Activated T-helper 2 cell treated with anti-CD3 and anti-CD28 coated beads, Interferon-gamma antibody, Interleukin-2, Interleukin-4, amounts not matched to agents 10 μg/mL and 5 μg/mL and 100 μg/mL, durations not matched to agents 14 hours and 24 hours and 36 hours (primary cell): ENCODE measurements at regions of chr7 and their contacts with region 1.

Region 1: GRCh38 chr7:43582503-43583423 is at the start of gene STK17A:
- DNase-seq: peak; percentile 94
- H3K4me3 Mint-ChIP-seq: peak within 1 kb of the TSS; percentile 91
- H3K27ac Mint-ChIP-seq: peak within 1 kb of the TSS; percentile 91
- H3K4me1 Mint-ChIP-seq: peaks cover 34% of the 10 kb centered on the region
- H3K27me3 Mint-ChIP-seq: peaks cover 19% of the 10 kb centered on the region
- total RNA-seq, gene STK17A: 20.4 and 21.7 TPM in 2 replicates

Region 2: GRCh38 chr7:43612599-43613589 is 30.1 kb after region 1 on chr7:
- intact Hi-C with region 1: loop called (anchors 1 kb)
- DNase-seq: no peak
- H3K4me3 Mint-ChIP-seq: peak overlapping the region; percentile 1
- H3K27ac Mint-ChIP-seq: peak overlapping the region; percentile 70
- H3K4me1 Mint-ChIP-seq: peaks cover 31% of the 10 kb centered on the region
- H3K27me3 Mint-ChIP-seq: no peaks in the 10 kb centered on the region

Region 3: DNA sequence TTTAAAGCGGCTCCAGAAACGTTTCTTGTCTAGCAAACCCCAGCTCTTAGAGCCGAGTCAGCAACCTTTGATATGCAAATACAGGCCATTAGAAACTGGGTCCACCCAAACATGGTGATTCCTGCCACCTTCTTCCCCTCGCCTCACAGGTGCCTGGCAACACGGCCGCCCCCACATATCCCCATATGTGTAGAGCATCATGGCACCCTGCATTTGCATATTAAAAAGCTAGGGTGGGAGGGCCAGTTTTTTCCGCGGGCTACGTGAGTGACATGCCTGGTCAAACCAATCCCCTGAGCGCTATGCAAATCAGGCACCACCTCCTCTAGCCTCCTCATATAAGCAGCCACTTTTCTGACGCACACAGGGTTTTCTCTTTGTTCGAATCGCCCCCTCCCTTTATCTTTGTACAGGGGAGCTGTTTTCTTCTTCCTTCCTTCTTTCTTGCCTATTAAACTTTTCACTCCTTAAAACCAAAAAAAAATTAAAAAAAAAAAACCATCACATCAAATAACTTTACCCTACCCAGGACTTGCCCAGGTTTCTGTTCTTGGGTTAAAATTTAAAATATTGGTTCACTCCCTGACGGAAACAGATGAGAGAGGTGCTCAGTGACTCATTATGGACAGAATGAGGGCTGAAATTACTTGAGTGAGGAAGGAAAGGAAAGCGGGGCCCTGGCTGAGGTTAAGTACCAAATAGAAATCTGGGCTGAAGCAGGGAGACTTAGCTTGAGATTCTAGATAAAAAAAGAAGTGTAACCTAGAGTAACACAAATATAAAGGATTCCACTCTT is 86.7 kb after region 1 on chr7:
- intact Hi-C with region 1: loop called (anchors 1 kb)
- DNase-seq: peak; percentile 26
- H3K4me3 Mint-ChIP-seq: peak overlapping the region; percentile 73
- H3K27ac Mint-ChIP-seq: peak overlapping the region; percentile 94
- H3K4me1 Mint-ChIP-seq: peaks cover 48% of the 10 kb centered on the region
- H3K27me3 Mint-ChIP-seq: no peaks in the 10 kb centered on the region

Region 4: GRCh38 chr7:43721193-43721806 is 138.5 kb after region 1 on chr7:
- intact Hi-C with region 1: loop called (anchors 1 kb)
- DNase-seq: no peak
- H3K4me3 Mint-ChIP-seq: no peak overlapping the region
- H3K27ac Mint-ChIP-seq: no peak overlapping the region
- H3K4me1 Mint-ChIP-seq: peaks cover 27% of the 10 kb centered on the region
- H3K27me3 Mint-ChIP-seq: no peaks in the 10 kb centered on the region

Region 5: DNA sequence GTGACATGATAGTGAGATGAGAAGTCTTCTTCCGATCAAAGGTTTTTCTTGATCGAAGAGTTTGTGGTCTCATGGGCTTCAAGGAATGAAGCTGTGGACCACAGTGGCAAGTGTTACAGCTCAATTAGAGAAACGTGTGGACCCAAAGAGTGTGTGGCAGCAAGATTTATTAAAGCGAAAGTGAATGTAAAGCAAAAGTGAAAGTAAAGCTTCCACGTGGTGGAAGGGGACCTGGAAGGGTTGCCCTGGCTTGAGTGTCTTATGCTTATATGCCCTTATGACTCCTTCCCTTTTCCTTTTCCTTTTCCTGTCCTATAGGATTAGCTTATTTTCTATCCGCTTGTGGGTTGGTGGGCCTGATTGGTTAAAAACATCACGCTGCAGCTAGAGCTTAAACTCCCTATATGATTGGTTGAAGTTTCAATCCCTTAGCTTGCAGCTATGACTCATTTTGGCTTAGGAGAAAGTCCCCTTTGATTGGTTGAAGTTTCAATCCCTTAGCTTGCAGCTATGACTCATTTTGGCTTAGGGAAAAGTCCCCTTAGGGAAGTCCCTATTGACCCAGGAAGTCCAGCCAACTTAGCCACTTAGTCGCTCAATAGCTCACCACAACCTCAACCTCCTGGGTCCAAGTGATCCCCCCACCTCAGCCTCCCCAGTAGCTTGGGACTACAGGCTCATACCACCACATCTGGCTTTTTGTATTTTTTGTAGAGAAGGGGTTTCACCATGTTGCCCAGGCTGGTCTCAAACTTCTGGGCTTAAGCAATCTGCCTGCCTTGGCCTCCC is 251.9 kb after region 1 on chr7:
- intact Hi-C with region 1: loop called (anchors 1 kb)
- DNase-seq: peak; percentile 24
- H3K4me3 Mint-ChIP-seq: peak overlapping the region; percentile 75
- H3K27ac Mint-ChIP-seq: peak overlapping the region; percentile 83
- H3K4me1 Mint-ChIP-seq: peaks cover 15% of the 10 kb centered on the region
- H3K27me3 Mint-ChIP-seq: no peaks in the 10 kb centered on the region